Astrocyte of the cerebellum (primary cell): ENCODE measurements at regions of chr16 and their contacts with region 1.

Region 1: GRCh38 chr16:73743665-73744496 is 552.7 kb upstream of the PSMD7 start:
- DNase-seq: no peak
- H3K4me3 ChIP-seq: no peak overlapping the region
- CTCF ChIP-seq: no peak

Region 2: DNA sequence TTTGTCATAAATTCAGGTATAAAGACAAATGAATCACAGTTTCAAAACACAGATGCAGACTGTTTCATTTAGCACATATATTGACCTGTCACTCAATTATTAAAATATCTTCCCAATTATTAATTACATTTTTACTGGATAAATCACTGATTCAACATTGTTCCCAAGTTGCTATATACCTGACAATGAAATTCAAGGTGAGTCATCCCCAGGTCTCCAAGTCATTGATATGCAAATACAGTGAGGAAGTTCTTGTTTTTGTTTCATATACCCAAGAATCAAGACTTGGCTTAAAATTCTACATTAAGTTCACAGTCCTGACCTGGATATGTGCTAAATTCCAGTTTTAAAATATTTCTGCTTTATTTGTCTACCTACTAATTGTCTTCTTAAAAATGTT is 46.5 kb before region 1 on chr16:
- in situ Hi-C with region 1: loop called (anchors 5 kb)
- DNase-seq: no peak
- H3K4me3 ChIP-seq: no peak overlapping the region
- CTCF ChIP-seq: no peak

Region 3: DNA sequence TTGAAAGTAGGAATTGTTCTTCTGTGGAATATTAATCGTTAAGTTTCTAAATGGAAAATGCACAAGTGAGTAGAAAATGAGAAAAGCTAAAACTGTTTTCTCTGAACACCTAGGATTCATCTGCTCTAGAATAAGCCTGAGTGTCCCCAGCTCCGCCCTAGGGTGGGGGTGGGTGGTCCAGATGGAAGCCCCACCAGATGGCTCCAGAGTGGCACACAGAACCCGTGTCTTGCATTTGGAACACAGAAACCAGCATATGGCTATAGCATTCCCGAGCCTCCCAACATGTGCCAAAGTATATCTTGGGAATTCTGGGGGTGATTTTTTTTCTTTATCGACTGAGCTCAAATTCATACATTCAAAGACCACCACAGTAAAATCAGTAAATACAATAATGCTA is 35.0 kb after region 1 on chr16:
- in situ Hi-C with region 1: no loop called
- DNase-seq: no peak
- H3K4me3 ChIP-seq: no peak overlapping the region
- CTCF ChIP-seq: no peak